ENCODE measurements at regions of chr21 and their contacts with region 1.

Region 1: GRCh38 chr21:38505654-38506515 is 7.6 kb upstream of the ERG start:
- DNase-seq: peak; percentile 18
- ATAC-seq: peak; percentile 93
- H3K4me3 ChIP-seq: no peak overlapping the region
- H3K27ac ChIP-seq: no peak overlapping the region
- H3K4me1 ChIP-seq: no peaks in the 10 kb centered on the region
- H3K27me3 ChIP-seq: no peaks in the 10 kb centered on the region
- CTCF ChIP-seq: peak; percentile 76

Region 2: GRCh38 chr21:38699048-38699447 is 193.2 kb after region 1 on chr21:
- CTCF ChIA-PET with region 1: interaction called, 10 read pairs
- POLR2A ChIA-PET with region 1: no interaction called
- in situ Hi-C with region 1: no loop called
- intact Hi-C with region 1: no loop called
- DNase-seq: no peak
- ATAC-seq: no peak
- H3K4me3 ChIP-seq: no peak overlapping the region
- H3K27ac ChIP-seq: no peak overlapping the region
- H3K4me1 ChIP-seq: no peaks in the 10 kb centered on the region
- H3K27me3 ChIP-seq: no peaks in the 10 kb centered on the region; the same call in 1 of the 2 replicates
- CTCF ChIP-seq: peak; percentile 30

Region 3: DNA sequence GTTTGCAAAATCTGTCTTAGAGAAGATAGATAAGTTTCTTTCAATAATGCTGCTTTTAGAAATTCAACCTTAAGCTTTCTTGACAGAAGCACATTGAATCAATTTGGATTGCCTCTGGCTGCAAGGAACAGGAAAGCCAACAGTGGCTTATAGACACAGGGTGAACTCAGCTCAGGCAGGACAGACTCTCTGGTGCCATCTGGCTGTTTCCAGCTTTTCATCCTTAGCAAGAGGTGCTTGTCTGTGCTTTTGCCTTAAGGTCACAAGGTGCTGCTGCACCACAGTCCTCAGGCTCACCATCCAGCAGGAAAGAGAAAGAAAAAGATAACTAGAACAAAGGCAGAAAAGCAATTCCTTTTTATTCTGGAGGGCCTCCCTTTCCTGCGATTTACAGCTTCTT is 206.2 kb after region 1 on chr21:
- CTCF ChIA-PET with region 1: interaction called, 3 read pairs
- POLR2A ChIA-PET with region 1: no interaction called
- in situ Hi-C with region 1: no loop called
- intact Hi-C with region 1: loop called (anchors 5 kb)
- DNase-seq: peak; percentile 30
- ATAC-seq: peak; percentile 94
- H3K4me3 ChIP-seq: no peak overlapping the region
- H3K27ac ChIP-seq: no peak overlapping the region
- H3K4me1 ChIP-seq: no peaks in the 10 kb centered on the region
- H3K27me3 ChIP-seq: no peaks in the 10 kb centered on the region
- CTCF ChIP-seq: peak; percentile 81

Region 4: DNA sequence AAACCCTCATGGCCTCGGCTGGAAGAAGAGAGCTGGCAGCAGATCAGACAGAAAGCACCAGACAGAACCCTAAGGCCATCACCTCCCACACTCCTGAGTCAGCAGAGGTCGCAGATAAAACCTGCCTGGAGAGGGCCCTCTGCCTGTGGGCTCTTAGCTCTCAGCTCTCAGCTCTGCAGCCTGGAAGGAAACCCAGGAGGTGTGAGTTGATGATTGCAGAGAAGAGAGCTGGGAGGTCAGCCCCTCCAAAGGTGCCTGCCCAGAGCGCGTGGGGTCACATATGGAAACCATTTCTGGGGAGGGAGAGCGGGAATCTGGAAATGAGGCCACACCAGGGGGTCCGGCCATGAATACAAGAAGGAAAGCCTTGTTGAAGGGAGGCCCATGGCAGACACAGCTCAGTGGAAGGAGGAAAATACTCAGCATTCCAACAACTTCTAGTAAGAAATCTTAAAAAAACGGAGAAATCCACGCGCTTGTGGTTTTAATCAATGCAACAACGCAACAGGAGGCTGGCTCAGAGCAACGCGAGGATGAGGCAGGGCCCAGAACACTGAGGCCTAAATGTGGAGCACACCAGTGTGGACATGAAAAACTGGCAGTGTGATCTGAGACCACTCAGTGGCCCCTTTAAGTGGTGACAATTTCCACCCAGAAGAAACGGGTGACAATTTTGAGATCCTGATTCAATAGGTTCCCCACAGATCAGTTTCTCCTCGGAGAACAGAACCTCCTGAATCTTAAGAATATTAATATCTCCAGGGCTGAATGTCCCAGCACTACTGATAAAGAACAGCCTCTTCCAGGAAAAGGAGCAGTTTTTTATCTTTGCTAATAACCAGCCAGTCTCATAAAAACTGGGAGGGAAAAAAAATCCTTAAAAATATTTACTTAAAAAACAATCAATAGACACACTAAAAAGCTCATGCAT is 631.6 kb after region 1 on chr21:
- CTCF ChIA-PET with region 1: interaction called, 4 read pairs
- POLR2A ChIA-PET with region 1: no interaction called
- in situ Hi-C with region 1: no loop called
- intact Hi-C with region 1: loop called (anchors 2 kb)
- DNase-seq: no peak
- ATAC-seq: peak; percentile 67
- H3K4me3 ChIP-seq: no peak overlapping the region
- H3K27ac ChIP-seq: peak overlapping the region; percentile 45
- H3K4me1 ChIP-seq: peaks cover 12% of the 10 kb centered on the region
- H3K27me3 ChIP-seq: no peaks in the 10 kb centered on the region
- CTCF ChIP-seq: no peak

Measured in Panc1 (cell line).